Calu3 (cell line): ENCODE measurements at regions of chr12 and their contacts with region 1.

Region 1: DNA sequence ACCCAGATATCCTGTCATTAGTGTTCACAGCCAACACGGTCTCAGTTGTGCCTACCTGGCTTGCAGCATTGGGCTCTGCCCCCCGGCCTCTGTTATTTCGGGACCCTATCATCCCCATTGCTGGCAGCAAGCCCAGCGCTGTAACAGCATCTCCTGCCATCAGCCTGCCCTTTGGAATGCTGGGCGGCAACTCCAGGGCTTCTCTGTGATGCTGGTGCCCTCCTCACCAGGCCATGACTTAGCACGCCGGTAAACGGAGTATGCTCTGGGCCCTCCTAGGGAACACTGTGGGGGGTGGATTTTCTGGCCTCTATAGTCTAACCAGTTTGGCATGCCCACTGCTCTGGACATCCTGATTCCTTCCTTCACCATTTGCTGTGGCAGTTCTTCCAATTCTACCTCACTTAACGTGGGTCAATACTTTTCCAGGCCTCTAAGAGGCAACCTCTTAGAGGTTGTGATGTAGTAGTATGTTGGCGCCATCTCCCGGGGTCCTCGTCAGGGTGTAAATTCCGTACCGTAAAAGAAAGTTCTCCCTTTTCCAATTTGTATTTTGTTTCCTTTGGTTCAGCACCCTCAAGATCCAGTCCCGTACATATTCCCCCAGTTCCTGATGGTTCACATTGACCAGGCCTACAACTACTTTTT is 80.0 kb downstream of the SINHCAF start:
- DNase-seq: no peak
- H3K4me3 Mint-ChIP-seq: no peak overlapping the region
- H3K27ac Mint-ChIP-seq: no peak overlapping the region
- H3K4me1 Mint-ChIP-seq: no peaks in the 10 kb centered on the region
- H3K27me3 Mint-ChIP-seq: peaks cover 22% of the 10 kb centered on the region
- CTCF ChIP-seq: peak; percentile 13

Region 2: GRCh38 chr12:31272607-31273225 is 26.8 kb after region 1 on chr12:
- CTCF ChIA-PET with region 1: interaction called, 16 read pairs
- intact Hi-C with region 1: no loop called
- DNase-seq: no peak
- H3K4me3 Mint-ChIP-seq: no peak overlapping the region
- H3K27ac Mint-ChIP-seq: no peak overlapping the region
- H3K4me1 Mint-ChIP-seq: no peaks in the 10 kb centered on the region
- H3K27me3 Mint-ChIP-seq: no peaks in the 10 kb centered on the region
- CTCF ChIP-seq: no peak

Region 3: DNA sequence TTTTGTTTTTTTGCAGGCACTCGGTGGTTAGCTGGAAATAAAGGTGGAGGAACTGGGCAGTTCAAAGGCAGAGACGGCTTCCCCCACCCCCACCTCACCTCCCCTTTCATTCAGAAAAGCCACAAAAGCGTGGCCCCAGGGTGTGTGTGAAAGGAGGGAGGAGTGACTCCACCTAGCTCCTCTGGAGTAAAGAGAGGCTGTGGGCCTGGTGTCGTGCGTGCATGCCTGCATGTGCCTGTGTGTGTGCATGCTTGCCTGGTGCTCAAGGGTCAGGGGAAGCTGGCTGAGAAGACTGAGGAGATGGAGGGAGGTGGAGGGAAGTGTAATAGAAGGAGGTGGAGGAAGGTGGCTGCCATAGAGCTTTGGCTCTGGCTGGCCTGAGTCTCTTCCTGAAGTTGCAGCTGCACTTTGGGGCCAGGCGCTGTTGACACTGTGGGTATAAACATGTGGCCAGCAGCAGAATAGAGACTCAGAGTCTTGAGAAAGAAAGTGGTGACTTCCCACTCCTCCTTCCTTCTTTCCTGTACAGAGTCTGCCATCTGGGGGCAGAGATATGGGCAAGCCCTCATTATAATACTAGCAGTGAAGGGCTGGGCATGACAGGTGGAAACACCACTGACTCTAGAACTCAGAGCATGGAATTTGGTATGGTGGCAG is 116.9 kb after region 1 on chr12:
- CTCF ChIA-PET with region 1: interaction called, 7 read pairs
- intact Hi-C with region 1: loop called (anchors 1 kb)
- DNase-seq: peak; percentile 40
- H3K4me3 Mint-ChIP-seq: peak overlapping the region; percentile 64
- H3K27ac Mint-ChIP-seq: peak overlapping the region; percentile 82
- H3K4me1 Mint-ChIP-seq: peaks cover 17% of the 10 kb centered on the region
- H3K27me3 Mint-ChIP-seq: no peaks in the 10 kb centered on the region
- CTCF ChIP-seq: no peak

Region 4: GRCh38 chr12:31406345-31406744 is 160.4 kb after region 1 on chr12:
- CTCF ChIA-PET with region 1: interaction called, 3 read pairs
- intact Hi-C with region 1: loop called (anchors 5 kb)
- DNase-seq: no peak
- H3K4me3 Mint-ChIP-seq: no peak overlapping the region
- H3K27ac Mint-ChIP-seq: no peak overlapping the region
- H3K4me1 Mint-ChIP-seq: no peaks in the 10 kb centered on the region
- H3K27me3 Mint-ChIP-seq: no peaks in the 10 kb centered on the region
- CTCF ChIP-seq: no peak

Region 5: DNA sequence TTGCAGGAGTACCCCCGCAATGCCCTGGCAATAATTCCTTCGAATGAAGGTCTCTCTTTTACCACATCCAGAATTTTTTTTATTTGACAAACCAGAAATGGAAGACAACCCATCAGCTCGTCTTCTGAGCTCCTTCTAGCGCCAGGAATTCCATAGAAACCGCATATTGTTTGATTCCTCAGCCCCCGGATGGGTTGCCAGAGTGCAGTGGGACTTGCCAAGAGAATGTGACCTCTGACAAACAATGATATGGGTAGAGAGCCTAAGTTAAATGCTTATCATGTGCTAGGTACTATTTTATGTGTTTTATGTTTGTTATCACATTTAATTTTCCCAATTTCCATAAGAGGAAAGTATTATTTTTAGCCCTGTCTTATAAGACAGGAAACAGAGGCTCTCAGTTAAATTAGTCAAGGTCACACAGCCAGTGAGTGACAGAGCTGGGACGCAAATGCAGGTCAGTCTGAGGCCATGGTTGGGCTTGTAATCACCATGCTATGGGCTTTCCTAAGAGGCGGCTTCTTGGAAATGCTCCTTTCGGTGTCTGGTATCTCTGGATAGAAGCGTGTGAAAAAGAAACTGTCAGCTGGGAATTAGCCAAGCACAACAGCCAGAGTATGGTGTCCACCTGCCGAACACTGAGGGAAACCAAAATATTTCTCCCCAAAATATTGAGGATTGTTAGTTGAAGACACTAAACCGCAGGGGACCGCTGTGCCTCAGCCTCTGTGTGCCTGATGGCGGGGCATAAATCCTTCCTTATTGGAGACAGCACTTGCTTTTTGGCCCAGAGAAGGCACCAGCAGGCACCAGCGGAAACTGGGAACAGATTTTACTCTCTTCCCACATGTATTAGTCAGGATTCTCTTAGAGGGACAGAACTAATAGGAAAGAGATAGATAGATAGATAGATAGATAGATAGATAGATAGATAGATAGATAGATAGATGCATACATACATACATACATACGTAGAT is 384.1 kb after region 1 on chr12:
- CTCF ChIA-PET with region 1: no interaction called
- intact Hi-C with region 1: loop called (anchors 5 kb)
- DNase-seq: no peak
- H3K4me3 Mint-ChIP-seq: no peak overlapping the region
- H3K27ac Mint-ChIP-seq: no peak overlapping the region
- H3K4me1 Mint-ChIP-seq: no peaks in the 10 kb centered on the region
- H3K27me3 Mint-ChIP-seq: no peaks in the 10 kb centered on the region
- CTCF ChIP-seq: no peak